Heart right ventricle (tissue), 16 donors: ENCODE measurements at regions of chr4 and their contacts with region 1.

Region 1: DNA sequence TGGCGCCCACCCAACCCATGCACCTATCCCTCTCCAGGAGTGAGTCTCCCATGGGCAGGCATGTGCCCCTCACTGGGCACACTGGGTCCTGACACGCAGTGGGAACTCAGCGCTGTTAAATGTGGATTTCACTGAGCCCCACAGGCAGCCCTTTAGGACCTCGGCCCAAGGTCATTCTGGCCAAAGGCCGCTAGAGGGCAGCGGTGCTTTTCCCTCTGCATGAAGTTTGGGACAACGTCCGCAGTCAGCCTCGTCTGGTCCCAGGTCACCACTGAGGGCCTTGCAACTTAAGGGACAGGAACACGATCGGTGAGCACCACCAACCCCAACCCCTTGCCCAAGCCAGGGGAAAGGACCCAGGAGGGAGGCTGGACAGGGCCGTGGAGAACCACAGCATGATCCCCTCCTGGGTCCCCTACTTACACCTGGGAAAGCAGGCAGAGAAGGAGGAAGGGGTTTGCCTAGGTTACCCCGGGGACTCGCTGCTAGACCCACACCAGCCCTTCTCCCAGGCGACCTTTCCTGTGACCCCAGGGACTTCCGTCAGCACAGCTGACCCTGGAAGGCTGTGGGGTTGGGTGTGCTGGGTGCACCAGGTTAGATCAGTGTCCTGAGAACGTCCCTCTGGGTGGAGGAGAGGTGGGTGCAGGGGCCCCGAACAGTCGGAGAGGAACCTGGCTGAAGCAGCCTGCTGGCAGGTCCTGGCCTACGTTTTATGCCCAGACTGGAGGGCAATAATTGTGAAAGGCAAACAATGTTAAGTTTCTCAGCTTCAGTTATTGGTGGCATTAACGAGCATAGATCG is 24.0 kb downstream of the CYTL1 start:
- DNase-seq: peak; percentile 66 to 71
- ATAC-seq: peak; percentile 63 to 89 (median 75)
- H3K4me3 ChIP-seq: no peak overlapping the region
- H3K27ac ChIP-seq: no peak overlapping the region
- H3K4me1 ChIP-seq: peaks cover 0 to 18% (median 10%) of the 10 kb centered on the region in 9 donors
- H3K27me3 ChIP-seq: peaks cover 0 to 13% (median 7%) of the 10 kb centered on the region in 7 donors
- CTCF ChIP-seq: peak; percentile 83 to 94 (median 89)

Region 2: DNA sequence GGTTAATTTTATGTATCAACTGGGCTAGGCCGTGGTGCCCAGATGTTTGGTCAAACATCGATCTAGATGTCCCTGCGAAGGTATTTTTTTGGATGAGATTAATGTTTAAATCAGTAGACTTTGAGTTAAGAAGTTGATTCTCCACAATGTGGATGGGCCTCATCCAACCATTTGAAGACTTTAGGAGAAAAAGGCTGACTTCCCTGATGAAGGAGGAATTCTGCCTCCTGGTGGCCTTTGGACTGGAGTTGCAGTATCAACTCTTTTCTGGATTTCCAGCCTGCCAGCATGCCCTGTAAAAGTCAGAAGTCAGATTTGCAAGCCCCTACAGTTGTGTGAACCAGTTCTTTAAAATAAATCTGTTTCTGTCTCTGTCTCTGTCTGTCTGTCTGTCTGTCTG is 147.4 kb after region 1 on chr4:
- intact Hi-C with region 1: loop called in 8 of 10 experiments (anchors 2 to 10 kb)
- DNase-seq: peak in 1 of 2 donors; percentile 28
- ATAC-seq: no peak
- H3K4me3 ChIP-seq: no peak overlapping the region
- H3K27ac ChIP-seq: no peak overlapping the region
- H3K4me1 ChIP-seq: no peaks in the 10 kb centered on the region
- H3K27me3 ChIP-seq: peaks cover 0 to under 1% (median 0%) of the 10 kb centered on the region in 7 donors
- CTCF ChIP-seq: peak in 8 of 9 donors; percentile 9 to 57 (median 48)

Region 3: GRCh38 chr4:5812506-5813229 is 817.4 kb after region 1 on chr4:
- intact Hi-C with region 1: loop called in 3 of 10 experiments (anchors 5 to 10 kb)
- DNase-seq: peak in 1 of 2 donors; percentile 52
- ATAC-seq: peak in 7 of 8 donors; percentile 68 to 80 (median 72)
- H3K4me3 ChIP-seq: no peak overlapping the region
- H3K27ac ChIP-seq: no peak overlapping the region
- H3K4me1 ChIP-seq: no peaks in the 10 kb centered on the region
- H3K27me3 ChIP-seq: no peaks in the 10 kb centered on the region
- CTCF ChIP-seq: peak; percentile 50 to 81 (median 71)